Endothelial cell of umbilical vein (primary cell): ENCODE measurements at regions of chr12 and their contacts with region 1.

Region 1: GRCh38 chr12:14845350-14845750 is 2.0 kb upstream of the ART4 start:
- DNase-seq: peak; percentile 81
- H3K4me3 ChIP-seq: no peak overlapping the region
- H3K27ac ChIP-seq: no peak overlapping the region
- H3K4me1 ChIP-seq: peaks cover 68% of the 10 kb centered on the region
- H3K27me3 ChIP-seq: no peaks in the 10 kb centered on the region
- CTCF ChIP-seq: peak; percentile 55 to 61
- POLR2A ChIP-seq: no peak

Region 2: GRCh38 chr12:14650789-14651188 is 194.6 kb before region 1 on chr12:
- CTCF ChIA-PET with region 1: no interaction called
- POLR2A ChIA-PET with region 1: no interaction called
- dilution Hi-C with region 1: no loop called
- intact Hi-C with region 1: no loop called
- DNase-seq: no peak
- H3K4me3 ChIP-seq: no peak overlapping the region
- H3K27ac ChIP-seq: no peak overlapping the region
- H3K4me1 ChIP-seq: no peaks in the 10 kb centered on the region
- H3K27me3 ChIP-seq: no peaks in the 10 kb centered on the region
- CTCF ChIP-seq: no peak
- POLR2A ChIP-seq: no peak

Region 3: GRCh38 chr12:14769969-14770495 is 75.3 kb before region 1 on chr12:
- CTCF ChIA-PET with region 1: interaction called, 10 read pairs
- POLR2A ChIA-PET with region 1: interaction called, 3 read pairs
- dilution Hi-C with region 1: no loop called
- intact Hi-C with region 1: loop called (anchors 1 kb)
- DNase-seq: peak; percentile 77
- H3K4me3 ChIP-seq: peak overlapping the region; percentile 22 to 82 (median 70)
- H3K27ac ChIP-seq: peak overlapping the region; percentile 91
- H3K4me1 ChIP-seq: peaks cover 7% of the 10 kb centered on the region
- H3K27me3 ChIP-seq: no peaks in the 10 kb centered on the region
- CTCF ChIP-seq: peak; percentile 73 to 87
- POLR2A ChIP-seq: peak; percentile 25

Region 4: GRCh38 chr12:14884458-14884878 is 39.1 kb after region 1 on chr12:
- CTCF ChIA-PET with region 1: interaction called, 4 read pairs
- POLR2A ChIA-PET with region 1: no interaction called
- dilution Hi-C with region 1: no loop called
- intact Hi-C with region 1: loop called (anchors 1 kb)
- DNase-seq: peak; percentile 84
- H3K4me3 ChIP-seq: peak overlapping the region; percentile 17 to 64 (median 62)
- H3K27ac ChIP-seq: peak overlapping the region; percentile 49
- H3K4me1 ChIP-seq: peaks cover 38% of the 10 kb centered on the region
- H3K27me3 ChIP-seq: no peaks in the 10 kb centered on the region
- CTCF ChIP-seq: no peak
- POLR2A ChIP-seq: no peak

Region 5: GRCh38 chr12:14948672-14949071 is 103.3 kb after region 1 on chr12:
- CTCF ChIA-PET with region 1: interaction called, 3 read pairs
- POLR2A ChIA-PET with region 1: no interaction called
- dilution Hi-C with region 1: no loop called
- intact Hi-C with region 1: loop called (anchors 1 kb)
- DNase-seq: peak; percentile 93
- H3K4me3 ChIP-seq: peak overlapping the region in 1 of 3 experiments; percentile 36
- H3K27ac ChIP-seq: peak overlapping the region; percentile 94
- H3K4me1 ChIP-seq: peaks cover 72% of the 10 kb centered on the region
- H3K27me3 ChIP-seq: no peaks in the 10 kb centered on the region
- CTCF ChIP-seq: no peak
- POLR2A ChIP-seq: peak; percentile 82

Region 6: DNA sequence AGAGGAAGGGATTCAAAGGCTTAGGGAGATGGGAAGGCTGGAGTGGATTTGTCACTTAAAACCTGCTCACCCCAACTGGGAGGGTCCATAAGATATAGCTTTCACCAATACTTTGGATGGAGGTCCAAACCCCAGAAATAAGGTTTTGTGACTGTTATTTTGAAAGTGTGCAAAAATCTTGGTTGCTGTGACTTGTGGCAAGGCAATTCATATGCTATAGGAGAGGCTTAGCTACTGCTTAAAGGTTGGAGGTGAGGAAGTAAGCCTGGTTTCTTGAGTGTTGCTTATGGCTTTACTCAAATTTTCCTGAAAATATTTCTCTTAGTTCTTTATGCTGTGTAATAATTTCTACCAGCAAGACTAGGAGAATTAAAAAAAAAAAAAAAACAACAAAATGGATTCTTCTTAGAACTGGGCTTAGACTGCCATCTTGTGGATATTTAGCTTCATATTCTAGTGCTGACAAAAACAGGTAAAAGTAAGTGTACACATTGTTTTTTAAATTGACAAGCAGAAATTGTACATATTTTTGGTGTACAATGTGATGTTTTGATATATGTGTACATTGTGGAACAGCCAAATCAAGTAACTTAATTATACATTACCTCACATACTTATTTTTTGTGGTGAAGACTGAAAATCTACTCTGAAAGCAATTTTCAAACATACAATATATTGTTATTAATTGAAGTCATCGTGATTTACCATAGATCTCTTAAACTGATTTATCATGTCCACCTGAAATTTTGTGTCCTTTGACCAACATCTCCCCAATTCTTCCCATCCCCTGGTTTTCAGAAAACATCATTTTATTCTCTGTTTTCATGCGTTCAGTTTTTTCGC is 150.5 kb after region 1 on chr12:
- CTCF ChIA-PET with region 1: interaction called, 97 read pairs
- POLR2A ChIA-PET with region 1: no interaction called
- dilution Hi-C with region 1: no loop called
- intact Hi-C with region 1: loop called (anchors 1 kb)
- DNase-seq: peak; percentile 81
- H3K4me3 ChIP-seq: no peak overlapping the region
- H3K27ac ChIP-seq: no peak overlapping the region
- H3K4me1 ChIP-seq: no peaks in the 10 kb centered on the region
- H3K27me3 ChIP-seq: peaks cover 0 to 1% of the 10 kb centered on the region in 2 experiments
- CTCF ChIP-seq: peak; percentile 18 to 34
- POLR2A ChIP-seq: no peak

Region 7: DNA sequence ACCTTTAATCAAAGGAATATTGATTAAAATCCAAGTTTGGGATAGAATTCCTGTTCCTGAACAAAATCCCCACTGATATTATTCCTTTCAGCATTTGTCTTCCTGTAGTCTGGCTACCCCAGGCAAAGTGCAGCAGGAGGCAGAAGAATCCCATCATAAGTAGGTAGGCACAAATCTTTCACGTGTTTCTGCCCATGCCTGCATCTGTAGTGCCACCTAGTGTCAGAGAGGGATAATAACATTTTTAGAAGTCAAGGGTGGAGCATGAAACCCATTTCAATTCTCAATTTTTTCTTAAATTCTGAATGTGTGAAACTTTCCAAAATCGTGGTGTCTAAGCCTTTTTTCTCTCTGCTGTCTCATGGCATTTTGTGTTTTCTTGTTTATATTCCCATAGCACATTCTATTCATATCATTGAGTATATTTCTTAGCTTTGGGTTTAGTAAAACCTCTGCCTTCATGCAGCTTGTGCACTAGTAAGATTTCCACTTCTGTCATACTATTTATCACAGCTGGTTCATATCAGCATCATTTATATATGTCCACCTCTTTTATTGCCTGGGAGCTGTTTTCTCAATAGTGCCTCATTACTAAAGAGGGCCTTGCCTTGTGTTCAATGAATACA is 423.7 kb after region 1 on chr12:
- CTCF ChIA-PET with region 1: no interaction called
- POLR2A ChIA-PET with region 1: no interaction called
- dilution Hi-C with region 1: no loop called
- intact Hi-C with region 1: loop called (anchors 1 kb)
- DNase-seq: peak; percentile 61
- H3K4me3 ChIP-seq: no peak overlapping the region
- H3K27ac ChIP-seq: no peak overlapping the region
- H3K4me1 ChIP-seq: no peaks in the 10 kb centered on the region
- H3K27me3 ChIP-seq: no peaks in the 10 kb centered on the region
- CTCF ChIP-seq: peak; percentile 69 to 72
- POLR2A ChIP-seq: no peak

Region 8: GRCh38 chr12:16030729-16031128 is 1185.4 kb after region 1 on chr12:
- CTCF ChIA-PET with region 1: no interaction called
- POLR2A ChIA-PET with region 1: no interaction called
- dilution Hi-C with region 1: no loop called
- intact Hi-C with region 1: no loop called
- DNase-seq: no peak
- H3K4me3 ChIP-seq: no peak overlapping the region
- H3K27ac ChIP-seq: no peak overlapping the region
- H3K4me1 ChIP-seq: no peaks in the 10 kb centered on the region
- H3K27me3 ChIP-seq: no peaks in the 10 kb centered on the region
- CTCF ChIP-seq: no peak
- POLR2A ChIP-seq: no peak